CD14-positive monocyte (primary cell): ENCODE measurements at regions of chr15 and their contacts with region 1.

Region 1: GRCh38 chr15:78195735-78196201 is 38.6 kb downstream of the ACSBG1 start:
- DNase-seq: peak; percentile 37 to 58 (median 54)
- H3K4me3 ChIP-seq: no peak overlapping the region
- H3K4me3 Mint-ChIP-seq: no peak overlapping the region
- H3K27ac ChIP-seq: no peak overlapping the region
- H3K27ac Mint-ChIP-seq: peak overlapping the region in 1 of 7 donors; percentile 50
- H3K4me1 ChIP-seq: peaks cover 0 to 3% of the 10 kb centered on the region in 2 donors
- H3K4me1 Mint-ChIP-seq: peaks cover 4% of the 10 kb centered on the region
- H3K27me3 ChIP-seq: no peaks in the 10 kb centered on the region
- H3K27me3 Mint-ChIP-seq: peaks cover 0 to 7% (median 4%) of the 10 kb centered on the region in 3 donors
- CTCF ChIP-seq: peak; percentile 77

Region 2: DNA sequence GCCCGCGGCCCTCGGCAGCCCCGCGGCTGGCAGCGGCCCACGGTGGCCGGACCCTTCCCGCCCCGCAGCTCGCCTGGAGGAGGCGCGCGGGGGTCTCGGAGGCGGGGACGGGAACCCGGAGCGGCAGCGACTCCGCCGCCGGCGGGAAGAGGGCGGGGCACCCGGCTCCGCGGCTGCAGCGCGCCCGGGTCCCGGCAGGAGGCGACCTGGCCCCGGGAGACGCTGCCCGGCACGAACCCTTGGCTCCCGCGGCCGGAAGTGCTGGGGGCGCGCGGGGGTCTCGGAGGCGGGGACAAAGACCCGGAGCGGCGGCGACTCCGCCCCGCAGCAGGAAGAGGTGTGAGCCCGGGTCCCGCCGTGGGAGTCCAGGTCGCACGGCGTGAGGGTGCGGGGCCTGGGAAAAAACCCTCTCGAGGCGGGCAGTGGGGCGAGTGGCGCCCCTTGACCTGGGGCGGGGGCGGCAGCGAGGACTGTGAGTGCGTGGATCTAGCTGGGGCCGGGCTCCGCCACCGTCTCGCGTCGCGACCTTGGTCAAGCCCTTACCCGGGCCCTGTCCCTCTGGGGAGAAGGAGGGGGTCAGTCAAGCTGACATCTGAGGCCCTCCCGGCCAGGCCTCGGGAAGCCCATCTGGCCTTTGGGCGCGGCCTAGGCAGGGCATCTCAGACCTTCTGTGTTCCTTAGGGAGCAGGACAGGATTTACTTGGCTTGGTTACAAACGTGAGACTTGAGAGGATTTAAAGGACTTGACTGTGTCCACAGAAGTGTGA is 64.3 kb before region 1 on chr15 and contains the start of gene CIB2:
- intact Hi-C with region 1: loop called (anchors 5 kb)
- DNase-seq: peak; percentile 29 to 58 (median 55)
- H3K4me3 ChIP-seq: peak within 1 kb of the TSS; percentile 74 to 84 (median 79)
- H3K4me3 Mint-ChIP-seq: peak within 1 kb of the TSS; percentile 85 to 89
- H3K27ac ChIP-seq: peak within 1 kb of the TSS in 1 of 2 donors; percentile 73
- H3K27ac Mint-ChIP-seq: peak within 1 kb of the TSS in 5 of 7 donors; percentile 23 to 75 (median 72)
- H3K4me1 ChIP-seq: peaks cover 9 to 20% of the 10 kb centered on the region in 2 donors
- H3K4me1 Mint-ChIP-seq: peaks cover 26% of the 10 kb centered on the region
- H3K27me3 ChIP-seq: peaks cover 0 to 8% of the 10 kb centered on the region in 2 donors
- H3K27me3 Mint-ChIP-seq: peaks cover 10 to 14% (median 12%) of the 10 kb centered on the region in 3 donors
- CTCF ChIP-seq: peak; percentile 94
- polyA plus RNA-seq, gene CIB2: 0.43 to 0.75 (median 0.51) TPM